ENCODE measurements at regions of chr7 and their contacts with region 1.

Region 1: GRCh38 chr7:100726996-100727761 is 6.2 kb upstream of the ZAN start:
- DNase-seq: no peak
- ATAC-seq: no peak
- H3K4me3 ChIP-seq: no peak overlapping the region
- H3K27ac ChIP-seq: no peak overlapping the region
- H3K4me1 ChIP-seq: peaks cover 9 to 17% of the 10 kb centered on the region in 2 experiments; a peak in 3 of 4 replicates
- H3K27me3 ChIP-seq: no peaks in the 10 kb centered on the region
- CTCF ChIP-seq: no peak
- POLR2A ChIP-seq: no peak
- RAD21 ChIP-seq: no peak

Region 2: DNA sequence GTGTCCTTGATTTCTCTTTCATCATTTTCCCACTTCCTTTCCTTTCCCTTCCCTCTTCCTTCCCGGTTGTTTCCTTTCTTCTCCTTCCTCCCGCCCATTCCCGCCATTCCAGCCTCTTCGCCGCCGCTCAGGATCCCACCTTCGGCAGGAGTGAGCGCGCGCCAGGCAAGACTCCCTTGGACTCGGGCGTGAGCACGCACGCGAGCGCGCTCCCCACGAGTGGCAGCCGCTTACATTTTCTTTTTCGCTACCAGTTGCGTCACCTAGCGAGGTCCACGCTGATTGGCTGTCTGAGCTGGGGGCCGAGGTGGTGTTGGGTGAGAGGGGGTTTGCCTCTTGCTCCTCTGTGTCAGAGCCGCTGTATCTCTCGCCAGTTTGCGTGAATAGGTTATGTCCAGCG is 18.0 kb after region 1 on chr7:
- CTCF ChIA-PET with region 1: interaction called, 9 read pairs
- POLR2A ChIA-PET with region 1: interaction called, 8 read pairs
- RAD21 ChIA-PET with region 1: no interaction called
- intact Hi-C with region 1: loop called (anchors 2 kb)
- DNase-seq: peak; percentile 46
- ATAC-seq: peak; percentile 95
- H3K4me3 ChIP-seq: peak overlapping the region; percentile 46 to 59
- H3K27ac ChIP-seq: peak overlapping the region; percentile 24; the same call in 1 of the 2 replicates
- H3K4me1 ChIP-seq: peaks cover 0 to 9% of the 10 kb centered on the region in 2 experiments; a peak in 2 of 4 replicates
- H3K27me3 ChIP-seq: no peaks in the 10 kb centered on the region
- CTCF ChIP-seq: no peak
- POLR2A ChIP-seq: peak; percentile 50
- RAD21 ChIP-seq: no peak